ENCODE measurements at regions of chr19 and their contacts with region 1.

Region 1: DNA sequence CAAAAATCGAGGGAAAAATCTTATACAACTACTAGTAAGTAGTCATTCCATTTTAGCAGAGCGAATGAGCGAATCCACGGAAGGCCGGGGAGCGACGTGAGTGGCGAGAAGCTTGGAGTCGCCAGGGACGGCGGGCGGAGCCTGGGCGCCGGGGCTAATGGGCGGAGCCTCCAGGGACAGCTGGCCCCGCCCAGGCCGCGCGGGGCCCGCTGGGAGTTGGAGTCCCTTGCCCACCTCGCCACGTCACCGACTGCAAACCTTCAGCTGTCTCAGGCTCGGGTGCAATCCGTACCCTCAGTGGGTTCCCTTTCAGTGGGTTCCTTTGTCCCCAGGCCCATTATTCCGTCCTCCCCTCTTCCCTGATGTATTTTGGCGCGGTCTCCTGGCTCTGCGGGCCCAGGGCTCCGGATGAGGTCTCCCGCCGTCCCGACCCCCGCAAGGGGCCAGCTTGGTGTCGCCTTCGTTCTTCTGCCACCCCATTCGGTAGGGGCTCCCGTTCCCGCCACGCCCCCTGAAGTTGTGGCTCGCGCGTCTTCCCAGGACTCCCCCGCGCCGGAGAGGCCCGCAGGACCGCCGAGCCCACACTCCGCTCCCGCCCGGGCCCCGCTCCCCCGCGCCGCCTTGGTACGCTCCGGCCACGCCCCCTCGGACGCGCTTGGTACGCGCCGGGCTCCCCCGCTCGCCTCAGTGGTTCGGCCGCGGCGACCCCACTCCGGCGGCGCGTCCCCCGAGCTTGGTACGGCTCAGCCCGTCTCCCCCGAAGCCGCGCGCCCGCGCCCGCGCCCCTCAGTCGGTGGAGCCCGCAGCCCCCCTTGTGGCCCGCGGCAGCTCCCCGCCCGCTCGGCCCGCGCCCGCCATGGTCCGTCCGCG is at the start of gene PTOV1:
- DNase-seq: peak; percentile 71
- H3K4me3 ChIP-seq: peak within 1 kb of the TSS; percentile 84
- H3K27ac ChIP-seq: peak within 1 kb of the TSS; percentile 100
- H3K27me3 ChIP-seq: no peaks in the 10 kb centered on the region
- CTCF ChIP-seq: no peak
- polyA plus RNA-seq, gene PTOV1: 37.6 and 58.5 TPM in 2 replicates

Region 2: GRCh38 chr19:49840321-49840720 is 10.4 kb before region 1 on chr19:
- CTCF ChIA-PET with region 1: no interaction called
- POLR2A ChIA-PET with region 1: no interaction called
- DNase-seq: no peak
- H3K4me3 ChIP-seq: no peak overlapping the region
- H3K27ac ChIP-seq: no peak overlapping the region
- H3K27me3 ChIP-seq: no peaks in the 10 kb centered on the region
- CTCF ChIP-seq: no peak

Region 3: DNA sequence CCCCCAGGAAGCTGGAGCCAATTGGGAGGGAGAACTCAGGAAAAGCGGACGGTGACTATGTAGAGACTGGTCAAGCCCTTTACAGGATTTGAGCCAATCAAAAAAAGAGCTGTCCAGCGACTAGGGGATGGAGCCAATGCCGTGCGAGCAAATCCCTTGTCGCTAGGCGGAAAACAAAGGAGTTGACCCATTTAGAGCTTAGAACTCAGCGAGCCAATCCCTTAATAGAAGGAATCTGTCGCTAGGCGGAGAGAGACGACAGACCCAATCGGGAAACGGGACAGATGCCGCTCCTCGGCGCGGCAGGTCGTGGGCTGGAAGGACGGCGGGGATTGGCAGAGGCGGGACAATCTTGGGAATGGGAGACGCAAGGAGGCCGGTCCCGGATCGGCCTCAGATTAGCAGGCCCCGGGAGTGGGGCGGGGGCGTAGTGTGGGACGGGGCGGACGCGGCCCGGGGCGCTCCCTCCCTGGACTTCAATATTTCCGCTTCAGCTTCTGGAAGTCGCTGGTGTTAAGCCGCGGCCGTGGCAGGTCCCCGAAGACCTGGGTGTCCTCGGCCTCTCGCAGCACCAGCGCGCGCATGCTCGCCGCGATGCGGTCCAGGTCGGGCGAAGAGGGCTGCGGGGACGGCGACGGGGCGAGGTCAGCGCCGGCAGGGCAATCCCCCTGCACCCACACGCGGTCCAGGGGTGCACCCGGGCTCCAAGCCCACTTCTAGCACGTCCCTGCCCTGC is 18.9 kb after region 1 on chr19:
- CTCF ChIA-PET with region 1: no interaction called
- POLR2A ChIA-PET with region 1: interaction called, 16 read pairs
- DNase-seq: peak; percentile 100
- H3K4me3 ChIP-seq: peak overlapping the region; percentile 62
- H3K27ac ChIP-seq: peak overlapping the region; percentile 80
- H3K27me3 ChIP-seq: no peaks in the 10 kb centered on the region
- CTCF ChIP-seq: no peak

Region 4: GRCh38 chr19:49877020-49877878 is 26.5 kb after region 1 on chr19 and contains the starts of genes AKT1S1 and TBC1D17:
- CTCF ChIA-PET with region 1: no interaction called
- POLR2A ChIA-PET with region 1: interaction called, 13 read pairs
- DNase-seq: peak; percentile 100
- H3K4me3 ChIP-seq: peak within 1 kb of the TSS; percentile 98
- H3K27ac ChIP-seq: peak within 1 kb of the TSS; percentile 100
- H3K27me3 ChIP-seq: no peaks in the 10 kb centered on the region
- CTCF ChIP-seq: no peak
- polyA plus RNA-seq, gene AKT1S1: 27.5 and 33.1 TPM in 2 replicates
- polyA plus RNA-seq, gene TBC1D17: 15.6 and 23.0 TPM in 2 replicates